Psoas muscle (tissue), 8 donors: ENCODE measurements at regions of chr1 and their contacts with region 1.

Region 1: GRCh38 chr1:241627453-241628259 is 12.5 kb downstream of the CHML start:
- DNase-seq: no peak
- ATAC-seq: no peak
- H3K4me3 ChIP-seq: no peak overlapping the region
- H3K27ac ChIP-seq: no peak overlapping the region
- H3K4me1 ChIP-seq: peaks cover 4% of the 10 kb centered on the region
- H3K27me3 ChIP-seq: no peaks in the 10 kb centered on the region
- CTCF ChIP-seq: peak; percentile 46

Region 2: GRCh38 chr1:241531195-241532161 is 96.2 kb before region 1 on chr1:
- intact Hi-C with region 1: loop called in 1 of 2 experiments (anchors 5 kb)
- DNase-seq: no peak
- ATAC-seq: peak; percentile 56 to 86 (median 62)
- H3K4me3 ChIP-seq: peak overlapping the region; percentile 73
- H3K27ac ChIP-seq: peak overlapping the region; percentile 38
- H3K4me1 ChIP-seq: no peaks in the 10 kb centered on the region
- H3K27me3 ChIP-seq: peaks cover 0 to 4% (median 3%) of the 10 kb centered on the region in 3 donors
- CTCF ChIP-seq: peak; percentile 58

Region 3: GRCh38 chr1:241706954-241707365 is 79.3 kb after region 1 on chr1:
- intact Hi-C with region 1: no loop called
- DNase-seq: no peak
- ATAC-seq: no peak
- H3K4me3 ChIP-seq: no peak overlapping the region
- H3K27ac ChIP-seq: no peak overlapping the region
- H3K4me1 ChIP-seq: no peaks in the 10 kb centered on the region
- H3K27me3 ChIP-seq: no peaks in the 10 kb centered on the region
- CTCF ChIP-seq: no peak